ENCODE measurements at regions of chr7 and their contacts with region 1.

Region 1: GRCh38 chr7:50212666-50213621 is 91.6 kb upstream of the IKZF1 start:
- DNase-seq: peak; percentile 81 to 97 (median 96)
- H3K4me3 ChIP-seq: peak overlapping the region in 3 of 7 experiments; percentile 20 to 35 (median 32)
- H3K27ac ChIP-seq: peak overlapping the region in 1 of 2 experiments; percentile 63
- H3K4me1 ChIP-seq: peaks cover 35 to 91% (median 75%) of the 10 kb centered on the region in 4 experiments
- H3K27me3 ChIP-seq: no peaks in the 10 kb centered on the region

Region 2: DNA sequence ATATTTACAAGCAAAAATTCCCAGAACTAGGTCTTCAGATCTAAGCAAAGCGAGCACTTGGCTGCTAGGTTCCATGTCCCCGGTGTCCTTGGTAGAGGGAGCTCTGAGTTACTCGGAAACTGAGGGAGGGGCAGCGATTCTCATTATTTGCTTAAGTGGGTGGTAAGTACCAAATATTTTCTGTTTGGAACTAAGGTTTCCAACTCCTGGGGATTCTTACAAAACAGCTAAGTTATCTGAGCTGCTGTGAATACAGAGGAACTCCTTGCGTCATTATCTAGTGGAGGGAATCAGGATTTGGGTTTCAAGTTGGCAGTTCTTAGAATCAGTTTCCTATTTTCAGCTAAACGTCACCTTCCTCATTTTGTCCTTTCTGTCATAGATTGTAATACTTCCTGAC is 14.8 kb after region 1 on chr7:
- CTCF ChIA-PET with region 1: interaction called, 26 read pairs
- POLR2A ChIA-PET with region 1: no interaction called
- DNase-seq: peak; percentile 39 to 82 (median 68)
- H3K4me3 ChIP-seq: peak overlapping the region in 4 of 7 experiments; percentile 29 to 62 (median 46)
- H3K27ac ChIP-seq: peak overlapping the region; percentile 48 to 68
- H3K4me1 ChIP-seq: peaks cover 15 to 34% (median 25%) of the 10 kb centered on the region in 4 experiments
- H3K27me3 ChIP-seq: no peaks in the 10 kb centered on the region

Region 3: DNA sequence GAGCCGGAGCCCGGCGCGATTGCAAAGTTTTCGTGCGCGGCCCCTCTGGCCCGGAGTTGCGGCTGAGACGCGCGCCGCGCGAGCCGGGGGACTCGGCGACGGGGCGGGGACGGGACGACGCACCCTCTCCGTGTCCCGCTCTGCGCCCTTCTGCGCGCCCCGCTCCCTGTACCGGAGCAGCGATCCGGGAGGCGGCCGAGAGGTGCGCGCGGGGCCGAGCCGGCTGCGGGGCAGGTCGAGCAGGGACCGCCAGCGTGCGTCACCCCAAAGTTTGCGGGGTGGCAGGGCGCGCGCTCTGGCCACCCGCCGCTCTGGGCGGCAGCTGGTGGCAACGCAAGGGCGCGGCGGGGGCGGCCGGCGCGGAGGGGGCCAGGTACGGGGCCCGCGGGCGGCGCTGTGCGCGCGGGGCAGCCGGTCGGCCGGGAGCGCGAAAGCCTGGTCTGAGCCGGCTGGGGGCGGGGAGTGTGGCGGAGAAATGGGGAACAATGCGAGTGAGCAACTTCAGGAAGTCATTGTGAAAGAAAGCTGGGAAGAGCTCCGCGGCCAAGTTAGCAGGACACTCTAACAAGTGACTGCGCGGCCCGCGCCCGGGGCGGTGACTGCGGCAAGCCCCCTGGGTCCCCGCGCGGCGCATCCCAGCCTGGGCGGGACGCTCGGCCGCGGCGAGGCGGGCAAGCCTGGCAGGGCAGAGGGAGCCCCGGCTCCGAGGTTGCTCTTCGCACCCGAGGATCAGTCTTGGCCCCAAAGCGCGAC is 91.4 kb after region 1 on chr7 and contains the start of gene IKZF1:
- CTCF ChIA-PET with region 1: interaction called, 20 read pairs
- POLR2A ChIA-PET with region 1: interaction called, 3 read pairs
- DNase-seq: peak; percentile 82 to 84 (median 83)
- H3K4me3 ChIP-seq: peak within 1 kb of the TSS; percentile 80 to 100 (median 94)
- H3K27ac ChIP-seq: peak within 1 kb of the TSS; percentile 67 to 87
- H3K4me1 ChIP-seq: peaks cover 22 to 41% (median 33%) of the 10 kb centered on the region in 4 experiments
- H3K27me3 ChIP-seq: no peaks in the 10 kb centered on the region

Measured in common myeloid progenitor, CD34-positive (primary cell).